SK-N-SH (cell line): ENCODE measurements at regions of chr12 and their contacts with region 1.

Region 1: GRCh38 chr12:47779301-47779942 is 6.4 kb downstream of the SLC48A1 start:
- DNase-seq: peak; percentile 88
- H3K4me3 ChIP-seq: peak overlapping the region in 1 of 2 experiments; percentile 31; a peak in 1 of 4 replicates
- H3K27ac ChIP-seq: no peak overlapping the region
- H3K4me1 ChIP-seq: peaks cover 15 to 44% of the 10 kb centered on the region in 2 experiments; a peak in 3 of 4 replicates
- H3K27me3 ChIP-seq: no peaks in the 10 kb centered on the region
- CTCF ChIP-seq: peak; percentile 92
- EP300 ChIP-seq: no peak
- RAD21 ChIP-seq: peak; percentile 98

Region 2: DNA sequence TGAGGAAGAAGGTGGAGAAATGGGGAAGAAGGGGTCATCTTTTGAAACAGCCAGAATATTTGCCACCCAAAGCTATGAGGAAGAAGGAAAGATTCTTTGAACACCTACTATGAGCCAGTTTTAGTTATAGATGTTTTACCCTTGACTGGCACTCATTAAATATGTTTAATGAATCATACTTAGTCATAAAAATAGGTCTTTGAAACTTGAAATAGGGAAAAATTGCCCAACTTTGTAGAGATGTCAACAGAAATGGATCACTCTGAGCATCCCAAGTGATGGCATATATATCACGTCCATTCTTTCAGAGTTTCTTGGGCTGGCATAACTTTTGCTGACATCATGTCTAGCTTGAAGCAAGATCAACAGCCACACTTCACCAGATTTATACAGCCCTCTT is 337.1 kb before region 1 on chr12:
- CTCF ChIA-PET with region 1: no interaction called
- POLR2A ChIA-PET with region 1: no interaction called
- DNase-seq: no peak
- H3K4me3 ChIP-seq: no peak overlapping the region
- H3K27ac ChIP-seq: no peak overlapping the region
- H3K4me1 ChIP-seq: no peaks in the 10 kb centered on the region
- H3K27me3 ChIP-seq: peaks cover 4% of the 10 kb centered on the region; the same call in 1 of the 2 replicates
- CTCF ChIP-seq: no peak
- EP300 ChIP-seq: no peak
- RAD21 ChIP-seq: no peak

Region 3: GRCh38 chr12:47705566-47706425 is 73.6 kb before region 1 on chr12 and contains the start of gene RPAP3:
- CTCF ChIA-PET with region 1: interaction called, 1,294 read pairs
- POLR2A ChIA-PET with region 1: no interaction called
- DNase-seq: peak; percentile 95
- H3K4me3 ChIP-seq: peak within 1 kb of the TSS; percentile 83 to 86
- H3K27ac ChIP-seq: peak within 1 kb of the TSS; percentile 61 to 84
- H3K4me1 ChIP-seq: peaks cover 0 to 5% of the 10 kb centered on the region in 2 experiments; a peak in 2 of 4 replicates
- H3K27me3 ChIP-seq: no peaks in the 10 kb centered on the region
- CTCF ChIP-seq: peak; percentile 63
- EP300 ChIP-seq: no peak
- RAD21 ChIP-seq: no peak
- polyA plus RNA-seq, gene RPAP3: 6.7 and 9.3 TPM in 2 replicates

Region 4: DNA sequence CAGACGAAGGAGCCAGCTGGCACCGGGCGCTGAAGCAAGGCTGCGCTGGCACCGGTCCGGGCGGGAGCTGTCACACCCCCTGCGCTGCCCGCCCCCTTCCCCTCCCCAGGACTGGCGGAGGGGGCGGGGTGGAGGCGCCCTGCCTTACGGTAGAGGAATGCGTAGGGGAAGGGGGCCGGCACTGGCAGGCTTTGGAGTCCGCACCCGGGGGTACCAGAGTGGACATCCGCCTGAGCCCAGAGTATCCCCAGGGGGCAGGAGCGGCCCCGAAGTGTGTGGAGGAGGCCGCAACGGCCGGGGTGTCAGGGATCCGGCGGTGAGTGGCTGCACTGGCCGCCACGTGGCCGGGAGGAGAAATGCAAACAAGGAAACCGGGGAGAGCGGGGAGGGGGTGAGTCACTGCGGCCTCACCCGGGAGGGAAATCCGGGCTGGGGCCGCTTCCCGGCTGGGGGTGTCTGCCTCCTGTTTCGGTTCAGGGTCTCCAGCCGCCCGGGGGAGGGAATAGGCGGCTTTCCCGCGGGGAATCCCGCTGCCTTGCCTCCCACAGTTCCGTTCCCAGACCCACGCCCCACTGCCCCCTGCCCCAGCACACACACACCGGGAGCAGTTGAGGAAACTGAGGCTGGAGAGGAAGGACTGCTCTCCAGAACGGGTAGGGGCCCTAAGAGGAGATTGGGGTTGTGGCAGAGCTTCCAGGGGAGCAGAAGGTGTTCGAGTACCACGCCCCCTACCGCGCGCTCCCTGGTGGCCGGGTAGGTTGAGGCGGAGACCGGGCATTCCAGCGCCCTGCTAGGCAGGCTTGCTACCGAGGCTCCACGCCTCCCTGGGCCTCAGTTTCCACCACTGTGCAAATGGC is 20.4 kb before region 1 on chr12 and contains the start of gene RAPGEF3:
- CTCF ChIA-PET with region 1: interaction called, 313 read pairs
- POLR2A ChIA-PET with region 1: interaction called, 3 read pairs
- DNase-seq: peak; percentile 95
- H3K4me3 ChIP-seq: peak within 1 kb of the TSS; percentile 55 to 69
- H3K27ac ChIP-seq: peak within 1 kb of the TSS in 1 of 2 experiments; percentile 42; a peak in 2 of 4 replicates
- H3K4me1 ChIP-seq: peaks cover 0 to 57% of the 10 kb centered on the region in 2 experiments; a peak in 2 of 4 replicates
- H3K27me3 ChIP-seq: no peaks in the 10 kb centered on the region
- CTCF ChIP-seq: peak; percentile 58
- EP300 ChIP-seq: peak in 1 of 2 experiments; percentile 45; a peak in 1 of 4 replicates
- RAD21 ChIP-seq: peak; percentile 53
- polyA plus RNA-seq, gene RAPGEF3: 0.90 and 0.93 TPM in 2 replicates

Region 5: DNA sequence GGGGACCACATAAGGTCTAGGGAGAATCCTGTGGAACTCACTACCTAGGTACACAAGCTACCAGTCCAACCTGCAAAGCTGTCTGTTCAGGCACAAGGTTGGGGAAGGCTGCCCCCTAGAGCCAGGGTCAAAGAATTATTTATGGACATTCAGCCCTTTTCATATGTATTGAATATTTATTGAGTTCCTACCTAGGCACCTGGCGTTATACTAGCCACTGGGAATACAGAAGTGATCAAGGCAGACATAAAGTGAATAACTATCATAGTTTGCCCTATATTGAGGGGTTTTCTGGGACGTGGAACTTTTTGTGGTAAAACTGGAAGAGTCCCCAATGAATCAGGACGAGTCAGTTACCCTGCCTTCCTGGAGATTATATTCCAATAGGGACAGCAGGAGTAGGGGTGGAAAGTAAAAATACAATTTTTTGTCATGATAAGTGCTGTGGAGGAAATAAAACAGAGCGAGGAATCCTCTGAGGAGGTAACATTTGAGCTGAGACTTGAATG is 12.2 kb before region 1 on chr12:
- CTCF ChIA-PET with region 1: interaction called, 313 read pairs
- POLR2A ChIA-PET with region 1: interaction called, 3 read pairs
- DNase-seq: no peak
- H3K4me3 ChIP-seq: no peak overlapping the region
- H3K27ac ChIP-seq: no peak overlapping the region
- H3K4me1 ChIP-seq: peaks cover 7 to 37% of the 10 kb centered on the region in 2 experiments; a peak in 2 of 4 replicates
- H3K27me3 ChIP-seq: no peaks in the 10 kb centered on the region
- CTCF ChIP-seq: peak; percentile 54
- EP300 ChIP-seq: no peak
- RAD21 ChIP-seq: peak; percentile 79

Region 6: GRCh38 chr12:47812797-47813510 is 33.5 kb after region 1 on chr12:
- CTCF ChIA-PET with region 1: interaction called, 10 read pairs
- POLR2A ChIA-PET with region 1: no interaction called
- DNase-seq: no peak
- H3K4me3 ChIP-seq: peak overlapping the region in 1 of 2 experiments; percentile 36; a peak in 1 of 4 replicates
- H3K27ac ChIP-seq: peak overlapping the region; percentile 48 to 84
- H3K4me1 ChIP-seq: peaks cover 67 to 76% of the 10 kb centered on the region in 2 experiments
- H3K27me3 ChIP-seq: no peaks in the 10 kb centered on the region
- CTCF ChIP-seq: no peak
- EP300 ChIP-seq: 0 out of 4 replicates have a peak, but pooled peaks of 1 of the 2 experiments have one; percentile 36
- RAD21 ChIP-seq: no peak

Region 7: GRCh38 chr12:48119078-48119833 is 339.8 kb after region 1 on chr12 and contains the start of gene PFKM:
- CTCF ChIA-PET with region 1: no interaction called
- POLR2A ChIA-PET with region 1: no interaction called
- DNase-seq: peak; percentile 84
- H3K4me3 ChIP-seq: peak within 1 kb of the TSS; percentile 91 to 98
- H3K27ac ChIP-seq: peak within 1 kb of the TSS; percentile 58 to 85; a peak in 3 of 4 replicates
- H3K4me1 ChIP-seq: peaks cover 6 to 7% of the 10 kb centered on the region in 2 experiments; a peak in 3 of 4 replicates
- H3K27me3 ChIP-seq: peaks cover 5% of the 10 kb centered on the region; the same call in 1 of the 2 replicates
- CTCF ChIP-seq: no peak
- EP300 ChIP-seq: no peak
- RAD21 ChIP-seq: no peak
- polyA plus RNA-seq, gene PFKM: 85.0 and 111 TPM in 2 replicates